GM12878 (cell line): ENCODE measurements at regions of chr5 and their contacts with region 1.

Region 1: GRCh38 chr5:14213813-14214585 is 70.9 kb downstream of the TRIO start:
- DNase-seq: no peak
- ATAC-seq: peak; percentile 29
- H3K4me3 ChIP-seq: peak overlapping the region; percentile 46
- H3K27ac ChIP-seq: peak overlapping the region; percentile 94
- H3K4me1 ChIP-seq: peaks cover 80% of the 10 kb centered on the region
- H3K27me3 ChIP-seq: no peaks in the 10 kb centered on the region
- CTCF ChIP-seq: no peak
- EP300 ChIP-seq: peak in 1 of 2 experiments; percentile 35; a peak in 1 of 4 replicates
- POLR2A ChIP-seq: no peak
- RAD21 ChIP-seq: no peak

Region 2: DNA sequence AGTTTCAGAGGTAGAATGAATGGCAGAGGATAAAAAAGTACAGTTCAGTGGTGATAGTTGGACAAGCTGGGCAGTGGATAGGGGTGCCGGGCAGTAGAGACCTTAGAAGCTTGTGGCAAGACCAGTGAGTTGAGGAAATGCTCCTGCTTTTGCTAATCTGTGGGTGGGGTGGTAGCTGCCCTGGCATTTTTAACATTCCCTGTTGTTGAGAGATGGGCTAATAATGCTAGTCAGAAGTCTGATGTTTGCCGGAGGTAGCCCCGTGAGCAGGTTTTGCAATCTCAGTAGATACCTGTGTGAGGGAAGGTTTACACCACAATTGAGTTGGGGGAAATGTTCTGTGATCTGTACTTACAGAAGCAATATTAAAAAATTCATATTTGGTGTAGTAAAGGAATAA is 20.2 kb after region 1 on chr5:
- CTCF ChIA-PET with region 1: interaction called, 6 read pairs
- POLR2A ChIA-PET with region 1: interaction called, 3 read pairs
- RAD21 ChIA-PET with region 1: interaction called, 4 read pairs
- SMC1A ChIA-PET with region 1: interaction called, 23 read pairs
- in situ Hi-C with region 1: no loop called
- intact Hi-C with region 1: no loop called
- DNase-seq: no peak
- ATAC-seq: no peak
- H3K4me3 ChIP-seq: no peak overlapping the region
- H3K27ac ChIP-seq: no peak overlapping the region
- H3K4me1 ChIP-seq: peaks cover 20% of the 10 kb centered on the region; the same call in 1 of the 2 replicates
- H3K27me3 ChIP-seq: no peaks in the 10 kb centered on the region
- CTCF ChIP-seq: no peak
- EP300 ChIP-seq: no peak
- POLR2A ChIP-seq: no peak
- RAD21 ChIP-seq: no peak